Activated naive CD4-positive, alpha-beta T cell treated with anti-CD3 and anti-CD28 coated beads for 36 hours (primary cell): ENCODE measurements at regions of chr17 and their contacts with region 1.

Region 1: DNA sequence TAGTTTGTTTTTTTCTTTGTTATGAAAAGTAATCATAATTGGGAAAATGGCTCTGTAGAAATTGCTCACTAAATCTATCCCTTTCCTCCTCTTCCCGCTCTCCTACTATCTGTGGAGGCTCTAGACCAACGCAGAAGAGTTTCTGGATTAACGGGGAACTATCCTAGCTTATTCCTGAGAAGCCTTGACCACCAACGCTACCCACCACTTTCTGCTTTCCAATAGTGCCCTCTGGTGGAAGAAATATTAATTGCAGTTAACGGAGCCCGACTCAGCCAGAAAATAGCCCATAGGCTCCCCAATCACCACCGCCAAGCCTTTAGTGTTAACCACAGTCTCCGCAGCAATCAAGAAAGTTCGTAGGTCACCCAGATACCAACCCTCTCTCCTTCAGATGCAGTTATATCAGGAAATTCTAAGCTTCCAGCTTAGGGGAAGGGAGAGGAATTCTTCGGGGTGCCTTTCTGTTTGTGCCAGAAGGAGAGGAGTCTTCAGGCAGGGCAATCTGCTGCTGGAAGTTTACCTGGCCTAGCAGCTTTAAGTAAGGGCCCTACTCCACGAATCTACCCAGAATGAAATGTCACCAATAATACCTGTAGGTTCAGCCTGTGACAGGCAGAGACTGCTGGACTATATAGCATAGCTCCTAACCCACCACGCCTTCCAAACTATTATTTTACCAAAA is 23.0 kb upstream of the NSRP1 start:
- DNase-seq: peak; percentile 56
- H3K4me3 Mint-ChIP-seq: no peak overlapping the region
- H3K27ac Mint-ChIP-seq: no peak overlapping the region
- H3K4me1 Mint-ChIP-seq: peaks cover 3% of the 10 kb centered on the region
- H3K27me3 Mint-ChIP-seq: peaks cover 9% of the 10 kb centered on the region

Region 2: GRCh38 chr17:29579866-29580771 is 513.5 kb before region 1 on chr17:
- CTCF ChIA-PET with region 1: no interaction called
- intact Hi-C with region 1: loop called (anchors 1 kb)
- DNase-seq: peak; percentile 96
- H3K4me3 Mint-ChIP-seq: no peak overlapping the region
- H3K27ac Mint-ChIP-seq: peak overlapping the region; percentile 77
- H3K4me1 Mint-ChIP-seq: peaks cover 24% of the 10 kb centered on the region
- H3K27me3 Mint-ChIP-seq: no peaks in the 10 kb centered on the region

Region 3: GRCh38 chr17:29807520-29808351 is 285.9 kb before region 1 on chr17:
- CTCF ChIA-PET with region 1: interaction called, 9 read pairs
- intact Hi-C with region 1: loop called (anchors 2 kb)
- DNase-seq: peak; percentile 87
- H3K4me3 Mint-ChIP-seq: no peak overlapping the region
- H3K27ac Mint-ChIP-seq: no peak overlapping the region
- H3K4me1 Mint-ChIP-seq: peaks cover 14% of the 10 kb centered on the region
- H3K27me3 Mint-ChIP-seq: no peaks in the 10 kb centered on the region

Region 4: DNA sequence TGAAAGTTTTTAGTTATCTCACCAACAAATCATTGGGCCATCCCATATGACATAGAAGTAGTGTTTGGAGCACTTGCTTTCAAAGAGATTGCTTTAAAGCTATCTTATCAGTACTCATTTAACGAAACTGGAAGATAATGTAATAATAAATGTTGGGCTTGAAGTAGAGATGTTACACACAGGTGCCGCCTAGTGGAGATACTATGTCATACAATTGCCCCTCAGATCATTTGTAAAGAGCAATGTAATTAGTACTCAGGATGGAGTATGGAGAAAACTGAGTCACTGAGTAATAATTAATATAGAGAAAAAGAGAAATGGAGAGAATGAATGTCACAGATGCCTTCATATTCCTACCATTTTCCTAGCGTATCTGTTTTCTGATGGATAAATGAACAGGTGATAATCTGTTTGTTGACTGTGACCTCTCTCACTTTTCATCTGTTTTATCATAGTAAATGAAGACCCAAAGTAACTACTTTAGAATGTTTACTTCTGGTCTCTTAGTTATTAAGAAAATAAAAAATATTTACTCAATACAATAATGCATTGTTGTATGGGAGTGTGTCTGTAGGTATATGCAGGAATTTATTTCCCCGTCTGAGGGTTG is 71.8 kb before region 1 on chr17:
- CTCF ChIA-PET with region 1: interaction called, 10 read pairs
- intact Hi-C with region 1: loop called (anchors 1 kb)
- DNase-seq: peak; percentile 63
- H3K4me3 Mint-ChIP-seq: no peak overlapping the region
- H3K27ac Mint-ChIP-seq: no peak overlapping the region
- H3K4me1 Mint-ChIP-seq: no peaks in the 10 kb centered on the region
- H3K27me3 Mint-ChIP-seq: no peaks in the 10 kb centered on the region

Region 5: GRCh38 chr17:30031214-30031869 is 62.3 kb before region 1 on chr17:
- CTCF ChIA-PET with region 1: interaction called, 18 read pairs
- intact Hi-C with region 1: loop called (anchors 1 kb)
- DNase-seq: no peak
- H3K4me3 Mint-ChIP-seq: no peak overlapping the region
- H3K27ac Mint-ChIP-seq: no peak overlapping the region
- H3K4me1 Mint-ChIP-seq: no peaks in the 10 kb centered on the region
- H3K27me3 Mint-ChIP-seq: no peaks in the 10 kb centered on the region

Region 6: DNA sequence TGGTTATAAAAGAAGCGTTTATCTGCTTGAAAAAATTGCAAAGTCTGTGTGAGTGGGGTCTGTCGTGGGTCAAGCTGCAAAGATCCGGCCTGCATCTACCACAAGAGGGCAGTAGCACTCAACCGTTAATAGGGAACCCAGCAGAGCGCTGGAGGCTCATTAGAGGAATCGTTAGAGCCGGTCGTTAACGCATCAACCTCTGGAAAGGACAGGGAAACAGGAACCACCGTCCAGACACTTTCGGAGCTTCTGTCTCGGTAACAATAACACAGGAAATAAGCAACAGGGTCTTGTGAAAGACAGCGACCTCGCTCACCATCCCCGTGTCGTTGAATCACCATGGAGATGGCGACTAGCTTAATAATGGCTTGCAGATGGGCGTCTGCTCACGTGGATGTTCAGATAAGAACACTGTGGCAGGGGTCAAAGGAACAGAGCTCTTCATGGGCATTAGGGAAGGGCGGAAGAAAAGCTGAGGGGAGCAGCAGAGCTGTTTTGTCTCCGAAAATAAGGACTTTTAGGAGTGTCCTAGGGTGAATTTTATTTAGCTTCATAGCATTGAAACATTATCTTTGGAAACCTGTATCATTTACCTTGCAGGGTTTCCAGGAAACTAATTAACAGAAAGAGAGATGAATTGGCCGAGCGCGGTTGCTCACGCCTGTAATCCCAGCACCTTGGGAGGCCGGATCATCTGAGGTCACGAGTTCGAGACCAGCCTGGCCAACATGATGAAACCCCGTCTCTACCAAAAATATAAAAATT is 11.2 kb after region 1 on chr17:
- CTCF ChIA-PET with region 1: interaction called, 59 read pairs
- intact Hi-C with region 1: no loop called
- DNase-seq: peak; percentile 84
- H3K4me3 Mint-ChIP-seq: peak overlapping the region; percentile 75
- H3K27ac Mint-ChIP-seq: no peak overlapping the region
- H3K4me1 Mint-ChIP-seq: peaks cover 5% of the 10 kb centered on the region
- H3K27me3 Mint-ChIP-seq: no peaks in the 10 kb centered on the region

Region 7: GRCh38 chr17:30153463-30153862 is 59.9 kb after region 1 on chr17:
- CTCF ChIA-PET with region 1: no interaction called
- intact Hi-C with region 1: no loop called
- DNase-seq: no peak
- H3K4me3 Mint-ChIP-seq: no peak overlapping the region
- H3K27ac Mint-ChIP-seq: no peak overlapping the region
- H3K4me1 Mint-ChIP-seq: peaks cover 22% of the 10 kb centered on the region
- H3K27me3 Mint-ChIP-seq: no peaks in the 10 kb centered on the region